Head of caudate nucleus (tissue), 42 donors: ENCODE measurements at regions of chr18 and their contacts with region 1.

Region 1: DNA sequence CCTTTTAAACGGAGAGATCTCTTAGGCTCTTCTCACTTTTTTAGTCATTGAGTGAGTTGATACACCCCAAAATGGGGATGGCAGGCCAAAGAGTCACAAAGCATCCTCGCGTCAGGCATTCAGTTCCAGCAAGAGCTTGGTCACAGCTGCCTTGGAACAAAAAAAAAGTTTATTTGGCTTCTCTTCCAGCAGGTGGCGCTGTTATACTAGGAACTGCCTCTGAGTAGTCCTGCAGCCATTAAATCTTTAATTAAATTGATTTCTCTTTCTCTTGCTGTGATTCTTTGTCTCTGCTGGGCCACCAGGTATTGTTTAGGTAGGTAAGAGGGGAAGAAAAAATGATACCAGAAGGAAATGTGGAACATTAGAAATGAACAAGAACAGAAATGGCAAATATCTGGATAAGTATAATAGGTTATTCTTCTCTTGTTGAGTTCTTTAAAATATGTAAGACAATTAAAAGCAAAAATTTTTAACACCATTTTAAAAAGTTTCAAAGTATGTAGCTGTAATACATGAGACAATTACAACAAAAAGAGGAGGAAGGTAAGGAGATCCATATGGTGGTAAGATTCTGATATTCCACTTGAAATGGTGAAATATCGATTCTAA is 175.1 kb downstream of the GALNT1 start:
- DNase-seq: peak in 40 of 42 donors; percentile 13 to 89 (median 70)

Region 2: DNA sequence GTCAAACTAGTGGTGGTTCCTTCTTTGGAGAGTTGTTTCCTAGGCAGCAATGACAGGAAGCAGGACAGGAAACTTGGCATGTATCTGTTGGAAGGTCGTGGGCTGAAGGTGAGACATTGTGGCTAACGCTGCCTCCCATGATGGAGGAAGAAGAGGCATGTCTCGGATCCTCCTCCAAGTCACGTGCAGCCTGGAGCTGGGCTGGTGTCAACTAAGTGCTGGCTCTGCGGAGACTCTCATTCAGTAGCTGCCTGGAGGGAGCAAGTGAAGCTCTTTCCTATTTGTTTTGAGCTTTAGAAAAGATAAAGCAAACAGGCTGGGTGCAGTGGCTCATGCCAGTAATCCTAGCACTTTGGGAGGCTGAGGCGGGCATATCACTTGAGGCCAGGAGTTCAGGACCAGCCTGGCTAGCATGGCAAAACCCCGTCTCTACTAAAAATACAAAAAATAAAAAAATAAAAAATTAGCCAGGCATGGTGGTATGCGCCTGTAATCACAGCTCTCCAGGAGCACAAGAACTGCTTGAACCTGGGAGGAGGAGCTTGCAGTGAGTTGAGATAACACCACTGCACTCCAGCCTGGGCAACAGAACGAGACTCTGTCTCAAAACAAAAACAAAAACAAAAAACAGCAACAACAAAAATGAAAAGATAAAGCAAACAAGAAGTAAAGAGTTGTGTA is 230.7 kb before region 1 on chr18:
- intact Hi-C with region 1: no loop called
- DNase-seq: peak in 7 of 42 donors; percentile 6 to 47 (median 33)

Region 3: GRCh38 chr18:35949903-35950627 is 193.5 kb after region 1 on chr18:
- intact Hi-C with region 1: loop called (anchors 5 kb)
- DNase-seq: peak; percentile 34 to 88 (median 70)